Esophagus muscularis mucosa (tissue), 4 donors: ENCODE measurements at regions of chr17 and their contacts with region 1.

Region 1: GRCh38 chr17:73371285-73371684 is 59.5 kb upstream of the CDC42EP4 start:
- DNase-seq: no peak
- H3K4me3 ChIP-seq: no peak overlapping the region
- H3K27ac ChIP-seq: no peak overlapping the region
- H3K4me1 ChIP-seq: peaks cover 0 to 13% (median 4%) of the 10 kb centered on the region in 4 donors
- H3K27me3 ChIP-seq: peaks cover 0 to 9% (median 0%) of the 10 kb centered on the region in 4 donors
- CTCF ChIP-seq: no peak
- EP300 ChIP-seq: no peak
- POLR2A ChIP-seq: no peak

Region 2: GRCh38 chr17:73132085-73132492 is 239.2 kb before region 1 on chr17:
- intact Hi-C with region 1: no loop called
- DNase-seq: no peak
- H3K4me3 ChIP-seq: no peak overlapping the region
- H3K27ac ChIP-seq: no peak overlapping the region
- H3K4me1 ChIP-seq: no peaks in the 10 kb centered on the region
- H3K27me3 ChIP-seq: no peaks in the 10 kb centered on the region
- CTCF ChIP-seq: no peak
- EP300 ChIP-seq: no peak
- POLR2A ChIP-seq: no peak

Region 3: GRCh38 chr17:73255671-73256181 is 115.6 kb before region 1 on chr17:
- intact Hi-C with region 1: loop called (anchors 1 kb)
- DNase-seq: no peak
- H3K4me3 ChIP-seq: no peak overlapping the region
- H3K27ac ChIP-seq: no peak overlapping the region
- H3K4me1 ChIP-seq: peaks cover 5 to 19% (median 10%) of the 10 kb centered on the region in 4 donors
- H3K27me3 ChIP-seq: no peaks in the 10 kb centered on the region
- CTCF ChIP-seq: peak; percentile 95 to 98 (median 98)
- EP300 ChIP-seq: no peak
- POLR2A ChIP-seq: no peak